Activated CD8-positive, alpha-beta T cell treated with anti-CD3 and anti-CD28 coated beads for 36 hours (primary cell): ENCODE measurements at regions of chr4 and their contacts with region 1.

Region 1: DNA sequence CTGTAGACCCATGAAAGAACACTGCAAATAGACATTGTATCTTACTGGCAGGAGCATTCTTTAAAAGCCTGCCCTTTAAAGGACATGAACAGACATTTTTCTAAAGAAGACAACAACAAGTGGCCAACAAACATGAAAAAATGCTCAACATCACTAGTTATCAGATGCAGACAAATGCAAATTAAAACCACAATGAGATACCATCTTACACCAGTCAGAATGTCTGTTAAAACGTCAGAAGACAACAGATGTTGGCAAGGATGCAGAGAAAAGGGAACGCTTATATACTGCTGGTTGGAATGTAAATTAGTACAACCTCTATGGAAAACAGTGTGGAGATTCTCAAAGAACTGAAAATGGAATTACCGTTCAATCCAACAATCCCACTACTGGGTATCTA is 77.2 kb downstream of the ATP10D start:
- DNase-seq: no peak
- ATAC-seq: no peak
- H3K4me3 Mint-ChIP-seq: no peak overlapping the region
- H3K27ac Mint-ChIP-seq: no peak overlapping the region
- H3K4me1 Mint-ChIP-seq: peaks cover 4% of the 10 kb centered on the region
- H3K27me3 Mint-ChIP-seq: no peaks in the 10 kb centered on the region
- CTCF ChIP-seq: no peak

Region 2: DNA sequence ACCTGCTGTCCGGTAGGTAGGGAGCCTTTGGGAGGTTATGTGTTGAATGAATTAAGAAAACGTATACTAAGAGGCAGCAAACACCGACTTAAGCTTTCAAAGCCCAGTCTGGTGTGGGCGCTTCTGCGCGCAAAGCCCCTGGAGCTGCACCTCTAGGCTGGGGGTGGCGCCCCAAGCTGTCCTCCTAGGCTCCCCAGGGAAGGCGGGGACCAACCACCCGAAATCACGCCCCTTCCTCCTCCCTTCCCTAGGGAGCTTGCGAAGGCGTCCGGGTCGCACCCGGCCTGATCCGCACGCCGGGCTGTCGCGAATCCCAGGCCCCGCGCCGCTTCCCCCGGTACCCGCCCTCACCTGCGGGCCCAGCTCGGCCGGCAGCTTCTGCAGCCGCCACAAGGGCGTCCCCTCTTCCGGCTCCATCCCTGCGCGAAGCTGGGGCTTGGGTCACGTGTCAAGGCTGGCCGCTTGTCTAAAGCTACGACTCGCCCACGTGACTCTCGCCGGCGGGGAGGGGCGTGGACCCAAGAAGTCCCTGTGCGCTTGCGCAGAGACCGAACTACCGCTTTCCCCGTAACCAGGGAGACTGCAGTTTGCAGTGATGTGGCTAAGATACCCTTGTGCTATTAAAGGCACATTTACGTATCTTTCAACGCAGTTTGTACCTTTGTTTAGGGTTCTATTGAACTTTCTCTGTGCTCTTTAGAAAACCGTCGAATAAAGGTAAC is 98.9 kb before region 1 on chr4 and contains the start of gene COMMD8:
- CTCF ChIA-PET with region 1: interaction called, 13 read pairs
- POLR2A ChIA-PET with region 1: no interaction called
- intact Hi-C with region 1: no loop called
- DNase-seq: peak; percentile 99
- ATAC-seq: peak; percentile 98
- H3K4me3 Mint-ChIP-seq: peak within 1 kb of the TSS; percentile 86
- H3K27ac Mint-ChIP-seq: peak within 1 kb of the TSS; percentile 76
- H3K4me1 Mint-ChIP-seq: peaks cover 31% of the 10 kb centered on the region
- H3K27me3 Mint-ChIP-seq: no peaks in the 10 kb centered on the region
- CTCF ChIP-seq: peak; percentile 39
- total RNA-seq, gene COMMD8: 30.5 to 32.8 TPM

Region 3: GRCh38 chr4:47490550-47490949 is 71.7 kb before region 1 on chr4:
- CTCF ChIA-PET with region 1: interaction called, 5 read pairs
- POLR2A ChIA-PET with region 1: no interaction called
- intact Hi-C with region 1: loop called (anchors 5 kb)
- DNase-seq: peak; percentile 30
- ATAC-seq: peak; percentile 96
- H3K4me3 Mint-ChIP-seq: no peak overlapping the region
- H3K27ac Mint-ChIP-seq: no peak overlapping the region
- H3K4me1 Mint-ChIP-seq: peaks cover 19% of the 10 kb centered on the region
- H3K27me3 Mint-ChIP-seq: no peaks in the 10 kb centered on the region
- CTCF ChIP-seq: peak; percentile 37

Region 4: GRCh38 chr4:47551682-47552081 is 10.6 kb before region 1 on chr4:
- CTCF ChIA-PET with region 1: interaction called, 12 read pairs
- POLR2A ChIA-PET with region 1: no interaction called
- intact Hi-C with region 1: no loop called
- DNase-seq: no peak
- ATAC-seq: no peak
- H3K4me3 Mint-ChIP-seq: no peak overlapping the region
- H3K27ac Mint-ChIP-seq: no peak overlapping the region
- H3K4me1 Mint-ChIP-seq: no peaks in the 10 kb centered on the region
- H3K27me3 Mint-ChIP-seq: no peaks in the 10 kb centered on the region
- CTCF ChIP-seq: no peak

Region 5: DNA sequence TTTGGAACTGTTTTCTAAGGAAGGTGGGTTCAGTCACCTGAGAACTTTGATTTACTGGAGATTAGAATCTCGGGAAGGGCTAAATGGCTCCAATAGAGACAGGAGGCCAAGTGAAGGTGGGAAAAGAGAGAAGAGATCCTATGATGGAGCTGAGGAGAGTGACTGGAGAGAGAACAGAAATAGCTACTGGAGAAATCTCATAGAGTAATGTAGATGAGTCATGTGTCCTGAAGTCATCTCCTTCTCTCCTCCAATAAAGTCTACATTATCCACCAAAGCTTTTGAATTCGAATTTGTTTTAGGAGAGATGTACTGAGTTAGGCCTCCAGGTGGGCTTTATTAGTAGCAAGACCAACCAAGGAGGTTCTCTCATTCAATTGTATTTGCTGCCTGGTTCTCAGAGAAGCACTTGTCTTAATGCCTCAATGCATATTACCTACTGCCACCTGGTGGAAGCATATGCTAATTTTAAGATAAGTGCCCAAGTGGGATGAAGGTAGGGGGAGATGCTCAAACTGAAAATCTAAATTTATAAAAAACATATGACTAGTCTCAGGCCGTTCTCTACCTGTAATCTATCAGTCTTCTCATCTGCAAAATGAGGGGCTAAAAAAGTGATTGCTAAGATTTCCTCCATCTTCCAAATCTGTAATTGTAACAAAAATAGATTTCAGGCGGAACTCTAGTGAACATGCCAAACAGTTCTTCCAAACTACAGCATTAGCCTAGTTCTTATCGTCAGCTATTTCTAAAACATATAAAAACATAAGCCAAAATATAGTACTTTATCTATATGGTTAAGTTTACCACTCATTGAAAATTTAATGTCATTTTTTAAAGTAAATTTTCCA is 547.3 kb after region 1 on chr4:
- CTCF ChIA-PET with region 1: no interaction called
- POLR2A ChIA-PET with region 1: no interaction called
- intact Hi-C with region 1: no loop called
- DNase-seq: no peak
- ATAC-seq: peak; percentile 78
- H3K4me3 Mint-ChIP-seq: no peak overlapping the region
- H3K27ac Mint-ChIP-seq: peak overlapping the region; percentile 65
- H3K4me1 Mint-ChIP-seq: peaks cover 61% of the 10 kb centered on the region
- H3K27me3 Mint-ChIP-seq: no peaks in the 10 kb centered on the region
- CTCF ChIP-seq: peak; percentile 73